Activated naive CD4-positive, alpha-beta T cell treated with anti-CD3 and anti-CD28 coated beads, Interleukin-2, amount 10 ng/mL, durations not matched to agents 7 days and 5 days (primary cell): ENCODE measurements at regions of chr5 and their contacts with region 1.

Region 1: GRCh38 chr5:138449501-138450239 is 10.8 kb downstream of the REEP2 start:
- DNase-seq: peak; percentile 84
- H3K4me3 Mint-ChIP-seq: no peak overlapping the region
- H3K27ac Mint-ChIP-seq: no peak overlapping the region
- H3K4me1 Mint-ChIP-seq: peaks cover 5% of the 10 kb centered on the region
- H3K27me3 Mint-ChIP-seq: peaks cover 37% of the 10 kb centered on the region

Region 2: GRCh38 chr5:138096363-138096762 is 353.3 kb before region 1 on chr5:
- CTCF ChIA-PET with region 1: no interaction called
- DNase-seq: no peak
- H3K4me3 Mint-ChIP-seq: no peak overlapping the region
- H3K27ac Mint-ChIP-seq: no peak overlapping the region
- H3K4me1 Mint-ChIP-seq: peaks cover 49% of the 10 kb centered on the region
- H3K27me3 Mint-ChIP-seq: peaks cover 6% of the 10 kb centered on the region

Region 3: DNA sequence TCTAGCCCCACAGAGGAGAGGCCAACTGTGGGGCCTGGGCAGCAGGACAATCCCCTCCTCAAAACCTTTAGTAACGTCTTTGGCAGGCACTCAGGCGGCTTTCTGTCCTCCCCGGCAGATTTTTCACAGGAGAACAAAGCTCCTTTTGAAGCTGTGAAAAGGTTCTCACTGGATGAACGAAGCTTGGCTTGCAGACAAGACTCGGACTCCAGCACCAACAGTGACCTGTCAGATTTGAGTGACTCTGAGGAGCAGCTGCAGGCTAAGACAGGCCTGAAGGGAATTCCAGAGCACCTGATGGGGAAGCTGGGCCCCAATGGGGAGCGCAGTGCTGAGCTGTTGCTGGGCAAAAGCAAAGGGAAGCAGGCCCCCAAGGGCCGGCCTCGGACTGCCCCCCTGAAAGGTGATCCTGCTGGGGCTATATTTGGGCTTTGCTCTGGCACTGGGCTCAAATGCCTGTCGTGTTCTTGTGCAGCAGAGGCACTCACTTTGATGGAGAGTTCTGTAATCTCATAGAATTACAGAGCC is 57.7 kb before region 1 on chr5:
- CTCF ChIA-PET with region 1: no interaction called
- DNase-seq: no peak
- H3K4me3 Mint-ChIP-seq: no peak overlapping the region
- H3K27ac Mint-ChIP-seq: no peak overlapping the region
- H3K4me1 Mint-ChIP-seq: no peaks in the 10 kb centered on the region
- H3K27me3 Mint-ChIP-seq: no peaks in the 10 kb centered on the region

Region 4: DNA sequence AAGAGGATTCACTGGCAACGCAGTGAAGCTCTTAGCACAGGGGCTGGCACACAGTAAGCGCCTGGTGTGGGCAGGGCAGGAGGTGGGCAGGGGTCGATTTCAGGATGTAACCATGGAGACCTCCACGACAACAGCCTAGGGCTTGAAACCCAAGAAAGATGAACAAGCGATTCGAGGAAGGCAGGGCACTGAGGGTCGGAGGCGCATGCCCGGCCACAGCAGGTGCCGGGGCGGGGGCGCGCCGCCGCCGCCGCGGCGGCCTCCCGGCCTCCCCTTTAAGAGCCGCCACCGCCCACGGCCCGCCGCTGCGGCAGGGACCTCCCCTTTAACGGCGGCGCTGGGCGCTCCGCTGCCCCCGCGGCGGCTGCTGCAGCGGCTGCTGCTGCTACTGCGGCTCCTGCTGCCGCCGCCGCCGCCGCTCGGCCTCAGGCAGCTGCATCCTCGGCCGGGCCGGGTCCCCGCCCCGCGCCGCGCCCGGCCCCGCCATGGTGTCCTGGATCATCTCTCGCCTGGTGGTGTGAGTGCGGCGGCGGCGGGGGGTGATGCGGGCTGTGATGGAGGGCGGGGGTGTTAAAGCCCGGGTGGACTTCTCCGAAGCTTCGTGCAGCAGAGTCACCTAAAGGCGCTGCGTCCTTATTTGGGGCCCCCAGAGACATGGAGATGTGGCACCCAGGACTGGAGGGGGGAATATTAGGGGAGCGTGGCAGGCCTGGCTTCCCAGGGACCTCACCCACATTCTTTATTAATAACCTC is 10.8 kb before region 1 on chr5 and contains the start of gene REEP2:
- CTCF ChIA-PET with region 1: interaction called, 16 read pairs
- DNase-seq: peak; percentile 71
- H3K4me3 Mint-ChIP-seq: peak within 1 kb of the TSS; percentile 73
- H3K27ac Mint-ChIP-seq: no peak within 1 kb of the TSS
- H3K4me1 Mint-ChIP-seq: peaks cover 14% of the 10 kb centered on the region
- H3K27me3 Mint-ChIP-seq: peaks cover 23% of the 10 kb centered on the region

Region 5: DNA sequence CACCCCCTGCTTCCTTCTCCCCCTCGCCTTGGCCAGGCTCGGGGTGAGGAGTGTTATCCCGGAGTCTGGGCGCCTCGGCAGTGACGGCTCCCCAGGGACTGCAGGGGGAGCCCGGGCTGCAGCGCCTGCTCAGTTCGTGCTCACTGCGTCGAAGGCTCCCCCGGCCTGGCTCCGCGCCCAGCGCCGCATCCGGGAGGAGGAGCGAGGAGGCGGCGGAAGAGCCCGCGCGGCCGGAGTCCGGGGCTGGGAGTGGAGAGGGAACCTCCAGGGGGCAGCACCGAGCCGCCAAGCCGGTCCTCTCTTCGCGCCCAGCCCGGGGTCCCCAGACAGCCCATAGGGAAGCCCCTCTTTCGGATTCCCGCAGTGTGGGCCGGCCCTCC is 14.3 kb after region 1 on chr5:
- CTCF ChIA-PET with region 1: interaction called, 35 read pairs
- DNase-seq: peak; percentile 93
- H3K4me3 Mint-ChIP-seq: peak overlapping the region; percentile 74
- H3K27ac Mint-ChIP-seq: peak overlapping the region; percentile 96
- H3K4me1 Mint-ChIP-seq: peaks cover 31% of the 10 kb centered on the region
- H3K27me3 Mint-ChIP-seq: peaks cover 42% of the 10 kb centered on the region

Region 6: DNA sequence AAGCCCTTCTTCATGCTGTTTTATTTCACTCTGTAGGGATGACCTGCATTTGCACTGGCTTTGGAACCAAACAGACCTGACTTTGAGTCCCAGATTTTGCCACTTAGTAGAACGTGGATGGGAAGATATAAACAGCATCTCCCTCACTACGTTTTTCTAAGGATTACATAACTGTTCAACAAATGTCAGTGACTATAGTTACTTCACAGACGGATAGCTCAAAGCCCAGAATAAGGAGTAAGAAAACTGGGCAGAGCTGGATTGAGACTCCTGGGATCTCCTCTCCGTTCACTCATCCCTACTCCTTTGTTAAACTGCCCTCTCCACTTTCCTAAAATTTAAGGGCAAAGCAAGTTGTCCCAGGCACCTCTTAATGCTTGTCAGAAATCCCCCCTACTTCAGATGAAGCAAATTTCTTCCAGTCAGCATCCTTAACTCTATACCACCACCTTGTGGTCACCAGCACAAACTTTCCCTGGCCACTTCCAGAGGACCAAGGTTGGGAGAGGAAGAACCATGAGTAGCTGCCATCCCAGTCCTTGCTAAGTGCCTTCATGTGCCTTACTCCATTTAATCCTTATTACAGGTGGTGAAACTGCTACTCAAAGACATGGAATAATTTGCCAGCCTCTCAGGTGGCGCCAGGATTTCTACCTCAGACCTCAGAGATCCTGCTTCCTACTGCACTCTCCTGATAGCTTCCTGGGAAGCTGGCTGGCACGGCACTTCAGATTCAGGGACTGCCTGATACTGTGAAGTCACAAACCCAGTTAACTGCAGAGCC is 54.0 kb after region 1 on chr5:
- CTCF ChIA-PET with region 1: interaction called, 114 read pairs
- DNase-seq: peak; percentile 46
- H3K4me3 Mint-ChIP-seq: no peak overlapping the region
- H3K27ac Mint-ChIP-seq: no peak overlapping the region
- H3K4me1 Mint-ChIP-seq: no peaks in the 10 kb centered on the region
- H3K27me3 Mint-ChIP-seq: peaks cover 4% of the 10 kb centered on the region

Region 7: GRCh38 chr5:138536665-138537315 is 87.1 kb after region 1 on chr5:
- CTCF ChIA-PET with region 1: interaction called, 10 read pairs
- DNase-seq: no peak
- H3K4me3 Mint-ChIP-seq: no peak overlapping the region
- H3K27ac Mint-ChIP-seq: no peak overlapping the region
- H3K4me1 Mint-ChIP-seq: peaks cover 53% of the 10 kb centered on the region
- H3K27me3 Mint-ChIP-seq: no peaks in the 10 kb centered on the region

Region 8: GRCh38 chr5:138542956-138543729 is 93.5 kb after region 1 on chr5 and contains the start of gene ETF1:
- CTCF ChIA-PET with region 1: interaction called, 13 read pairs
- DNase-seq: peak; percentile 100
- H3K4me3 Mint-ChIP-seq: peak within 1 kb of the TSS; percentile 99
- H3K27ac Mint-ChIP-seq: peak within 1 kb of the TSS; percentile 100
- H3K4me1 Mint-ChIP-seq: peaks cover 60% of the 10 kb centered on the region
- H3K27me3 Mint-ChIP-seq: no peaks in the 10 kb centered on the region